ENCODE measurements at regions of chrX and their contacts with region 1.

Region 1: DNA sequence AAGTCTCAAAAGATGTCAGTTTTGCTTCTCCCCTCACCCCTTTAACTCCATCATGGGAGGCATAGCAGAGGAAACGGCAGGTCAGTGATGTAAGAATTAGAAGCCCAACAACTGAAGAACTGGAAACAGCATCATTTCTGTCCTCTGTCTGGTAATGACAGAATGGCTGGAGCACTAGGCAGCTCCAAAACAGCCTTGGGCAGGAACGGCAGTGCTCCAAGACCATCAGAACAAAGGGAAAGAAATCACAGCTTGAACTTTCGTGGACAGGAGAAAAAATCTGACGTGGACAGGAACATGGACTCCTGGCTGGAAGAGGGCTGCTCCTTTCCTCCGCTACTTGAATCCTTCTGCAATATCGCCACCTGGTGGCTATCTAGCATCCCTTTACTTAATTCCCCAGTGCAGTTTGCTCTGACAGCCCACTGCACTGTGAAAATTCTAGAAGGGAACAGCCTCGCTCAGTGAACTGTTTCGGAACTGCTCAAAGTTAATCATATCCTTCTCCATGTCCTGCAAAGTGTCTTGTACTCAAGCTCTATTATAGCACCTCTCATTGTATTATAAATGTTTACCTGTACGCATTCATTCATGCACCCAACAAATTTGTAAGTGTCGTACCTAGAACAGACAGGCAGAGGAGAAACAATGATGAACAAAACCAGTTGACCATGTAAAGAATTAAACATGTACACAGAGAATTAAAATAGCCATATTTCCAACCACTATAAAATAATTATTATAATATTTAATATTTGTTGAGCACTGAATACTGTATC is 20.4 kb downstream of the SLC25A53 start:
- DNase-seq: peak; percentile 77
- ATAC-seq: peak; percentile 62
- H3K4me3 ChIP-seq: no peak overlapping the region
- H3K4me3 Mint-ChIP-seq: no peak overlapping the region
- H3K27ac ChIP-seq: no peak overlapping the region
- H3K27ac Mint-ChIP-seq: no peak overlapping the region
- H3K4me1 ChIP-seq: peaks cover 7 to 14% of the 10 kb centered on the region in 2 donors
- H3K4me1 Mint-ChIP-seq: peaks cover 23% of the 10 kb centered on the region
- H3K27me3 ChIP-seq: no peaks in the 10 kb centered on the region
- H3K27me3 Mint-ChIP-seq: no peaks in the 10 kb centered on the region
- CTCF ChIP-seq: peak; percentile 77

Region 2: DNA sequence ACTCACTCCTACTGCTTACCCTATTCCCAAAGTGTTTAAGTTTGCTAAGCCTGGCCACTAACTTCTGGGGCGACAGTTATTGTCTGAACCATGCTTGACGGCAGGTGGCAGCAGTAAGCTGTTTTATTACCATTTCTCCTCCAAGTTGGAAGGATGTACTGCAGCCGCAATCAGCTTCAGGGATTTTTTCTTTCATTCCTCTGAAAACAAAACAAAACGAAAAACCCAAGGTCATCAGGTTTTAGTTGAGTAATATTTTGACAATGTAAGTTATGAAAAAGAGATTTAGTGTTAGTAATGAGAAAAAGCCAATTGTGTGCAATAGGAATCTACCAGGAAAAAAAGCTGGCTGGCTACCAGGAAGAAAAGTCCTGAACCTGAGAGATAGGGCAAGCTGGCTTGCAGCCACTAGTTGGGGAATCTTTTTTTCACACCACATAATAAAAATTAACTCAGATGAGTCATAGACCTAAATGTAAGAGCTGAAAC is 291.2 kb before region 1 on chrX:
- CTCF ChIA-PET with region 1: interaction called, 13 read pairs
- POLR2A ChIA-PET with region 1: no interaction called
- intact Hi-C with region 1: loop called (anchors 1 kb)
- DNase-seq: peak; percentile 50
- ATAC-seq: peak; percentile 39
- H3K4me3 ChIP-seq: no peak overlapping the region
- H3K4me3 Mint-ChIP-seq: no peak overlapping the region
- H3K27ac ChIP-seq: no peak overlapping the region
- H3K27ac Mint-ChIP-seq: no peak overlapping the region
- H3K4me1 ChIP-seq: no peaks in the 10 kb centered on the region
- H3K4me1 Mint-ChIP-seq: no peaks in the 10 kb centered on the region
- H3K27me3 ChIP-seq: no peaks in the 10 kb centered on the region
- H3K27me3 Mint-ChIP-seq: peaks cover 2% of the 10 kb centered on the region
- CTCF ChIP-seq: peak; percentile 58

Region 3: DNA sequence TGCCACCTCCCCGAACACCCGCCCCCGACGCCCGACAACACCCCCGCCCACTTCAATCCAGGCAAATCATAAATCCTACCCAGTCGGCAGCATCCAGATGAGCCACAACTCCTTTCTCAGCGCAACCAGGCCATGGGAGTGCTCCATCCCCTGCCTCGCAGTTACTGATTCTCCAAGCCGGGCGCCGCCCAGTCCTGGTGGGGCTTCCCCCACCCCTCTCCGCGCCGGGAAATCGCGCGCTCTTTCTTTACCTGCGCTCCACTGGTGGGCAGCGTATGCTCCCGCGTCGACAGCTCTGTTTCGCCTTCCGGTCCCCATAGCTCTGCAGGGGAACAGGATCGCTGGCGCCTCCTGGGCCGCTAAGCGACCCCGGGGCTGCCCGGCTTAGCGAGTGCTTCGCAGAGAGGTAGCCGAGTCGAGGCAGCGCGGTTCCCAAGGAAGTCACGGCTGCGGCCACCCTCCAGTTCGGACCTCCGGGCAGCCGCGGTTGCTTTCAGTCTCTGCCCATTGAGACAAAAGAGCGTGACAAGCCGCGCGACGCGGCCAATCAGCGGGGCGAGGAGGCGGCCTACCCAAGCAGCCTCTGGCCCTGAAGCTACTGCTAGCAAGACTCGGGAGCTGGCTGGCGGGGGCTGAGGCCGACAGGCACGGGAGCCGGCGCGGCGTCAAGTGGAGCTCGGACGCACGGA is 217.7 kb before region 1 on chrX:
- CTCF ChIA-PET with region 1: interaction called, 9 read pairs
- POLR2A ChIA-PET with region 1: no interaction called
- intact Hi-C with region 1: loop called (anchors 1 kb)
- DNase-seq: peak; percentile 69
- ATAC-seq: peak; percentile 75
- H3K4me3 ChIP-seq: peak overlapping the region in 4 of 5 experiments; percentile 65 to 72 (median 67)
- H3K4me3 Mint-ChIP-seq: peak overlapping the region; percentile 94
- H3K27ac ChIP-seq: peak overlapping the region; percentile 53 to 70
- H3K27ac Mint-ChIP-seq: peak overlapping the region; percentile 91
- H3K4me1 ChIP-seq: peaks cover 0 to 5% of the 10 kb centered on the region in 2 donors
- H3K4me1 Mint-ChIP-seq: peaks cover 12% of the 10 kb centered on the region
- H3K27me3 ChIP-seq: no peaks in the 10 kb centered on the region
- H3K27me3 Mint-ChIP-seq: no peaks in the 10 kb centered on the region
- CTCF ChIP-seq: no peak

Region 4: GRCh38 chrX:104098151-104098808 is 38.1 kb before region 1 on chrX:
- CTCF ChIA-PET with region 1: interaction called, 33 read pairs
- POLR2A ChIA-PET with region 1: no interaction called
- intact Hi-C with region 1: loop called (anchors 1 kb)
- DNase-seq: peak; percentile 77
- ATAC-seq: peak; percentile 63
- H3K4me3 ChIP-seq: no peak overlapping the region
- H3K4me3 Mint-ChIP-seq: no peak overlapping the region
- H3K27ac ChIP-seq: no peak overlapping the region
- H3K27ac Mint-ChIP-seq: no peak overlapping the region
- H3K4me1 ChIP-seq: no peaks in the 10 kb centered on the region
- H3K4me1 Mint-ChIP-seq: peaks cover 2% of the 10 kb centered on the region
- H3K27me3 ChIP-seq: no peaks in the 10 kb centered on the region
- H3K27me3 Mint-ChIP-seq: peaks cover 4% of the 10 kb centered on the region
- CTCF ChIP-seq: peak; percentile 70

Region 5: GRCh38 chrX:104113222-104113965 is 23.0 kb before region 1 on chrX:
- CTCF ChIA-PET with region 1: interaction called, 25 read pairs
- POLR2A ChIA-PET with region 1: interaction called, 4 read pairs
- intact Hi-C with region 1: no loop called
- DNase-seq: peak; percentile 65
- ATAC-seq: peak; percentile 63
- H3K4me3 ChIP-seq: peak overlapping the region; percentile 41 to 73 (median 65)
- H3K4me3 Mint-ChIP-seq: peak overlapping the region; percentile 92
- H3K27ac ChIP-seq: peak overlapping the region; percentile 29 to 63
- H3K27ac Mint-ChIP-seq: peak overlapping the region; percentile 91
- H3K4me1 ChIP-seq: peaks cover 29 to 39% of the 10 kb centered on the region in 2 donors
- H3K4me1 Mint-ChIP-seq: peaks cover 41% of the 10 kb centered on the region
- H3K27me3 ChIP-seq: no peaks in the 10 kb centered on the region
- H3K27me3 Mint-ChIP-seq: no peaks in the 10 kb centered on the region
- CTCF ChIP-seq: peak; percentile 53

Region 6: GRCh38 chrX:104122829-104123228 is 13.6 kb before region 1 on chrX:
- CTCF ChIA-PET with region 1: interaction called, 24 read pairs
- POLR2A ChIA-PET with region 1: no interaction called
- intact Hi-C with region 1: no loop called
- DNase-seq: peak; percentile 38
- ATAC-seq: peak; percentile 68
- H3K4me3 ChIP-seq: no peak overlapping the region
- H3K4me3 Mint-ChIP-seq: peak overlapping the region; percentile 74
- H3K27ac ChIP-seq: peak overlapping the region; percentile 57 to 78
- H3K27ac Mint-ChIP-seq: peak overlapping the region; percentile 97
- H3K4me1 ChIP-seq: peaks cover 39 to 60% of the 10 kb centered on the region in 2 donors
- H3K4me1 Mint-ChIP-seq: peaks cover 57% of the 10 kb centered on the region
- H3K27me3 ChIP-seq: no peaks in the 10 kb centered on the region
- H3K27me3 Mint-ChIP-seq: no peaks in the 10 kb centered on the region
- CTCF ChIP-seq: no peak

Region 7: DNA sequence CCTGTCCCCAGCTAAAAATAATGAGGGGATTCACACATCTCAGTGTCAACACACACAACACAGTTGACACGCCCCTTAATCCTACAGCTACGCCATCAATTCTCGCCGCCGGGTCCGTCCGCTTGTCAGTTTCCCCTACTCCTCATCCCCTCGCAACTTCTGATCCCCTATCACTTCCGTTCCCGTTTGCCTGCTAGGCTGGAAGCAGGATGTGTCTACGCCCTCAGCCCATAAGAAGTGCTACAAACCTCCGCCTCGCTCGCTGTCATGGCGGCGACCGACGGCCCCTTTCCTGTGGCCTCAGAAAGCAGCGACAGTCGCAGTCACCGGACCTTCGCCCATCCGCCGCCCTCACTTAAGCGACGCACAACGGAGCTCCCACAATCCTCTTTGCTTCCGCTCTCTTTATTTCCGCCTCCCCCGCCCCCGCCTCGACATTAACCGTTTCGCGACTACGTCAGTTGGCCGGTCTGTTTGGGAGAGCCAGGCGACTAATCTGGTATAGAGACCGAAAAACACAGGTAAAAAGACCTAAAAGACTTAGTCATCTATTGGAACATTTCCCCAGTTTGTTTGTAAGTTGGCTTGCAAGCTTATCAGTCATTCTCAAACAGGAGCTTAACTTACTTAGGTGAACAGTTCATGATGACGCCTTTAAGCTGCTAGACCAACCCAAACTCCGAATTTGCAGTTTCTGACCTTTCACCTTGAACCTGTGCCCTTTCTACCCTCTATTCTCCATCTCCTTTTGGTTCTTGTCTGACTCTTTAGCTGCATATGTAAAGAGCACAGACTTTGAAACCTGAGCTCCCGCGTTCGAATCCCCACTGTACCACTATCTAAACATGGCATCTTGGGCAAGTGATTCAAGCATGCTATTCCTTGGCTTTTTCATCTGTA is 20.4 kb after region 1 on chrX and contains the start of gene SLC25A53:
- CTCF ChIA-PET with region 1: interaction called, 10 read pairs
- POLR2A ChIA-PET with region 1: no interaction called
- intact Hi-C with region 1: loop called (anchors 2 kb)
- DNase-seq: peak; percentile 90
- ATAC-seq: peak; percentile 84
- H3K4me3 ChIP-seq: peak within 1 kb of the TSS; percentile 57 to 74 (median 71)
- H3K4me3 Mint-ChIP-seq: peak within 1 kb of the TSS; percentile 99
- H3K27ac ChIP-seq: peak within 1 kb of the TSS; percentile 96 to 99
- H3K27ac Mint-ChIP-seq: peak within 1 kb of the TSS; percentile 100
- H3K4me1 ChIP-seq: peaks cover 5 to 16% of the 10 kb centered on the region in 2 donors
- H3K4me1 Mint-ChIP-seq: peaks cover 22% of the 10 kb centered on the region
- H3K27me3 ChIP-seq: no peaks in the 10 kb centered on the region
- H3K27me3 Mint-ChIP-seq: no peaks in the 10 kb centered on the region
- CTCF ChIP-seq: no peak
- total RNA-seq, gene SLC25A53: 17.1 and 20.7 TPM in 2 replicates

Measured in B cell (primary cell).